CD4-positive, alpha-beta memory T cell (primary cell): ENCODE measurements at regions of chr15 and their contacts with region 1.

Region 1: GRCh38 chr15:33132722-33133345 is 61.7 kb downstream of the FMN1 start:
- DNase-seq: peak in 2 of 5 donors; percentile 27 to 35
- H3K4me3 ChIP-seq: no peak overlapping the region
- H3K4me3 Mint-ChIP-seq: peak overlapping the region in 4 of 8 donors; percentile 68 to 82 (median 72)
- H3K27ac ChIP-seq: no peak overlapping the region
- H3K27ac Mint-ChIP-seq: peak overlapping the region in 2 of 7 donors; percentile 69 to 85
- H3K4me1 ChIP-seq: no peaks in the 10 kb centered on the region
- H3K4me1 Mint-ChIP-seq: peaks cover 0 to 20% (median 3%) of the 10 kb centered on the region in 4 donors
- H3K27me3 ChIP-seq: no peaks in the 10 kb centered on the region
- H3K27me3 Mint-ChIP-seq: peaks cover 0 to 1% of the 10 kb centered on the region in 2 donors

Region 2: GRCh38 chr15:32664796-32665195 is 468.0 kb before region 1 on chr15:
- CTCF ChIA-PET with region 1: interaction called, 12 read pairs
- POLR2A ChIA-PET with region 1: no interaction called
- intact Hi-C with region 1: no loop called
- DNase-seq: no peak
- H3K4me3 ChIP-seq: no peak overlapping the region
- H3K4me3 Mint-ChIP-seq: no peak overlapping the region
- H3K27ac ChIP-seq: no peak overlapping the region
- H3K27ac Mint-ChIP-seq: no peak overlapping the region
- H3K4me1 ChIP-seq: no peaks in the 10 kb centered on the region
- H3K4me1 Mint-ChIP-seq: peaks cover 5 to 6% (median 5%) of the 10 kb centered on the region in 4 donors
- H3K27me3 ChIP-seq: no peaks in the 10 kb centered on the region
- H3K27me3 Mint-ChIP-seq: no peaks in the 10 kb centered on the region

Region 3: DNA sequence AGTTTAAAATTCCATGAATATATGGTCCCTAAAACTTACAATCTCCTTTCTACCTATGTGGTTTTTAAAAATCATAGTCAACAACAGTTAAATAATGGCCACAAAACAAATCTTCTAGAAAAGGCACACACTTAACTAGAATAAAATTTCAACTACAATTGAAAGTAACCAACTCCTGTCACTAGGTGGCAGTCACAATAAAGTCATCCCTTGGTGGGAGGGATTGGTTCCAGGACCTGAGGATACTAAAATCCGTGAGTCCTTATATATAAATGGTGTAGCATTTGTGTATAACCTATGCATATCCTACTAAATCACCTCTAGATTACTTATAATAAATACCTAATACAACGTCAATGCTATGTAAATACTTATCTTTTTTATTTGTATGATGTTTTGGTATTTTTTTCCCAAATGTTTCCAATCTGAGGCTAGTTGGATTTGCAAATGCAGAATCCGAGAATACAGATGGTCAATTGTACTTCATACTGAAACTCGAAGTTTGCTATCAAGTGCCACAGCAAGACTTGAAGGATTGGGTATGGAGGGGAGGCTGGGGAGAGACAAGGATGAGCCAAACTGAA is 110.9 kb before region 1 on chr15:
- CTCF ChIA-PET with region 1: no interaction called
- POLR2A ChIA-PET with region 1: no interaction called
- intact Hi-C with region 1: no loop called
- DNase-seq: peak in 1 of 5 donors; percentile 15
- H3K4me3 ChIP-seq: no peak overlapping the region
- H3K4me3 Mint-ChIP-seq: no peak overlapping the region
- H3K27ac ChIP-seq: no peak overlapping the region
- H3K27ac Mint-ChIP-seq: no peak overlapping the region
- H3K4me1 ChIP-seq: no peaks in the 10 kb centered on the region
- H3K4me1 Mint-ChIP-seq: peaks cover 0 to 24% (median 0%) of the 10 kb centered on the region in 4 donors
- H3K27me3 ChIP-seq: no peaks in the 10 kb centered on the region
- H3K27me3 Mint-ChIP-seq: no peaks in the 10 kb centered on the region

Region 4: GRCh38 chr15:33086507-33087121 is 46.2 kb before region 1 on chr15:
- CTCF ChIA-PET with region 1: interaction called, 17 read pairs
- POLR2A ChIA-PET with region 1: no interaction called
- intact Hi-C with region 1: loop called (anchors 1 kb)
- DNase-seq: peak in 4 of 5 donors; percentile 9 to 59 (median 44)
- H3K4me3 ChIP-seq: no peak overlapping the region
- H3K4me3 Mint-ChIP-seq: peak overlapping the region in 4 of 8 donors; percentile 55 to 65 (median 62)
- H3K27ac ChIP-seq: no peak overlapping the region
- H3K27ac Mint-ChIP-seq: peak overlapping the region in 3 of 7 donors; percentile 41 to 61 (median 60)
- H3K4me1 ChIP-seq: peaks cover 6% of the 10 kb centered on the region
- H3K4me1 Mint-ChIP-seq: peaks cover 0 to 34% (median 0%) of the 10 kb centered on the region in 4 donors
- H3K27me3 ChIP-seq: no peaks in the 10 kb centered on the region
- H3K27me3 Mint-ChIP-seq: peaks cover 0 to 3% of the 10 kb centered on the region in 2 donors